ENCODE measurements at regions of chr5 and their contacts with region 1.

Region 1: GRCh38 chr5:143002459-143003328 is 232.5 kb downstream of the ARHGAP26 start:
- DNase-seq: peak; percentile 96
- H3K4me3 Mint-ChIP-seq: no peak overlapping the region
- H3K27ac Mint-ChIP-seq: peak overlapping the region; percentile 92
- H3K4me1 Mint-ChIP-seq: peaks cover 29% of the 10 kb centered on the region
- H3K27me3 Mint-ChIP-seq: no peaks in the 10 kb centered on the region
- CTCF ChIP-seq: peak; percentile 72

Region 2: DNA sequence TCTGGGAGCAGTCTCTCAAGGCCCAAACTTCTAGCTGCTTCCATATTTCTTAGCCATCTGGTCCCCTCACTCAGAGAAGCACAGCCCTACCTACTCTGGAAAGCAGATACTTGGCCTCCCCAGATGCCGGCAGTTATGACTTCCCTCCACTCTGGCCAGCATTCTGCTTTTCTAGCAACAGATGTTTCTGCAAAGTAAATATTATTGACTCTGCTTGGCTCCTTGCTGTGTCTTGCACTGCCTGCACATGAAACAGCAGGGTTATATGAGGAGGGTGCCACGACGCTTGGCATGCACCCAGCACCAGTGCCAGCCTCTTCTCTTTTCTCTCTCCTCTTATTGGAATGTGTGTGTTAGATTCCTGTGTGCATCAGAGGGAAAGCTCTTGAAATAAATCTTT is 132.8 kb before region 1 on chr5:
- CTCF ChIA-PET with region 1: no interaction called
- POLR2A ChIA-PET with region 1: no interaction called
- intact Hi-C with region 1: no loop called
- DNase-seq: no peak
- H3K4me3 Mint-ChIP-seq: no peak overlapping the region
- H3K27ac Mint-ChIP-seq: no peak overlapping the region
- H3K4me1 Mint-ChIP-seq: peaks cover 63% of the 10 kb centered on the region
- H3K27me3 Mint-ChIP-seq: no peaks in the 10 kb centered on the region
- CTCF ChIP-seq: no peak

Region 3: DNA sequence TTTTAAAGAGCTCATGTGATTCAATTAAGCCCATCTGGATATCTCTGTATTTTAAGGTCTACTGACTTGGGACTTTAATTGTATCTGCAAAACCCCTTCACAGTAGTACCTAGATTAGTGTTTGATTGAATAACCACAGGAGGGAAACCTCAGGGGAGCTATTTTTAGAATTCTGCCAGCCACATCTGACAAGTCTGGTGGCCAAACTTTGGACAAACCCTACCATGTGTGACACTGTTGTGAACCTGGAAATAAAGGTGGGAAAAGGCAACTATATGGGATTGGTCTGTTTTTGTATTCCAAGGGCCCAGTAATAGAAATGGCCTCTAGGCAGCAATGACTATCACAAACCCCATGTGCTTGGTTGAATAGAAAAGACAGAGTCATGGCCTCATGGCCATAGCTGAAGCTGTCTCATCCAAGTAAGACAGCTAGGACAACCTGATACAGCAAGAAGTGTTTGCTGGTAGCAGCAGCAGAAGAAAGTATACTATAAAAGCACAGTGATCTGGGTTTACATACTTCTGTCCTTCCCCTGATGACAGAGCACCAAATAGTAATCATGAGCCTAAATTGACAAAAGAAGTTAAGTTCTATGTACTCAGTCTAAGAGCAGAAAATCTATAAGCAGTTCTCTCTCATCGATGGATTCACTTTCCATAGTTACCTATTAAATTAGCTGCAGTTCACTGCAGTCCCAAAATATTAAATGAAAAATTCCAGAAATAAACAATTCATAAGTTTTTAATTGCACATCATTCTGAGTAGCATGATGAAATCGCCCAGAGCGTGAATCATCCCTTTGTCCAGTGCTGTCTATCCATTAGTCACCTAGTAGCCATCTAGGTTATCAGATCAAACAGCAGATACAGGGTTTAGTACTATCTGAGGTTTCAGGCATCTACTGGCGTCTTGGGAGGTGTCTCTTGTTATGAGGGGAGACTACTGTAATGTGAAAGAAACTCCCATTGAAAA is 42.7 kb before region 1 on chr5:
- CTCF ChIA-PET with region 1: interaction called, 6 read pairs
- POLR2A ChIA-PET with region 1: interaction called, 3 read pairs
- intact Hi-C with region 1: loop called (anchors 2 kb)
- DNase-seq: peak; percentile 89
- H3K4me3 Mint-ChIP-seq: no peak overlapping the region
- H3K27ac Mint-ChIP-seq: peak overlapping the region; percentile 60
- H3K4me1 Mint-ChIP-seq: peaks cover 26% of the 10 kb centered on the region
- H3K27me3 Mint-ChIP-seq: no peaks in the 10 kb centered on the region
- CTCF ChIP-seq: no peak

Region 4: DNA sequence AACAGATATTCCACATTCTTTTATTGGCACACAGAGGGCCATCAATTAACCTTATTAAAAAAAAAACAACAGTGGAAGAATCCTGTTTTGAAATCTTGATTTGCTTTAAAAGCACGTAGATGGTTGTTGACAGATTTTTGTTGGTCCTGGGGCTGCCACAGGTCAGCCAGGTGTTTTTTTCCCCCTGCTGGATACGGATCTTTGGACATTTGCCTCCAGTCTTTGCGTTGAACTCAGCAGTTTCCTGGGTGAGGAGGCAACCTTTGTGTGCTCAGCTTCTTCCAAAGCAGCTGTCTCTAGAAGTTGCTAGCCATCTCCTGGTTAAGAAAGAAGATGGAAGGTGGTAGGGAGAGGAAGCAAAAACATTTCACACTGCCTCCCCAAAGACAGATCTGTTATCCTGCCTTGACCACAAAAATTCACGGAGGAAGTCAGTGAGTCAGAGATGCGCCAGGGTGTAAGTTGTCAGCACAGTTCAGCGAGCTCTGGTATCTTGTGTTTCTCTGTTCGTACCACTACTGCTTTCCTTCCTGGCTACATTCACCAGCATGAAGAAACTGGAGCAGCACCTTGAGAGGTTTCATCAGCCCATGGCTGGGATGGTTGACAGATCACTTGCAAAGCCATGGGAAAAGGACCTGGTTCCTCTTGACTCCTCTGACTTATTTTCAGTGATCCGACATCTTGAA is 25.2 kb before region 1 on chr5:
- CTCF ChIA-PET with region 1: interaction called, 14 read pairs
- POLR2A ChIA-PET with region 1: interaction called, 7 read pairs
- intact Hi-C with region 1: no loop called
- DNase-seq: peak; percentile 93
- H3K4me3 Mint-ChIP-seq: peak overlapping the region; percentile 29
- H3K27ac Mint-ChIP-seq: peak overlapping the region; percentile 87
- H3K4me1 Mint-ChIP-seq: peaks cover 43% of the 10 kb centered on the region
- H3K27me3 Mint-ChIP-seq: no peaks in the 10 kb centered on the region
- CTCF ChIP-seq: no peak

Region 5: GRCh38 chr5:143244000-143244736 is 241.5 kb after region 1 on chr5:
- CTCF ChIA-PET with region 1: interaction called, 4 read pairs
- POLR2A ChIA-PET with region 1: interaction called, 6 read pairs
- intact Hi-C with region 1: loop called (anchors 5 kb)
- DNase-seq: peak; percentile 98
- H3K4me3 Mint-ChIP-seq: peak overlapping the region; percentile 54
- H3K27ac Mint-ChIP-seq: peak overlapping the region; percentile 84
- H3K4me1 Mint-ChIP-seq: peaks cover 61% of the 10 kb centered on the region
- H3K27me3 Mint-ChIP-seq: no peaks in the 10 kb centered on the region
- CTCF ChIP-seq: no peak

Region 6: GRCh38 chr5:143314659-143315058 is 312.0 kb after region 1 on chr5:
- CTCF ChIA-PET with region 1: interaction called, 3 read pairs
- POLR2A ChIA-PET with region 1: no interaction called
- intact Hi-C with region 1: loop called (anchors 5 kb)
- DNase-seq: peak; percentile 68
- H3K4me3 Mint-ChIP-seq: no peak overlapping the region
- H3K27ac Mint-ChIP-seq: peak overlapping the region; percentile 73
- H3K4me1 Mint-ChIP-seq: peaks cover 69% of the 10 kb centered on the region
- H3K27me3 Mint-ChIP-seq: no peaks in the 10 kb centered on the region
- CTCF ChIP-seq: no peak

Region 7: GRCh38 chr5:143506881-143507551 is 504.3 kb after region 1 on chr5:
- CTCF ChIA-PET with region 1: interaction called, 8 read pairs
- POLR2A ChIA-PET with region 1: interaction called, 3 read pairs
- intact Hi-C with region 1: loop called (anchors 5 kb)
- DNase-seq: peak; percentile 98
- H3K4me3 Mint-ChIP-seq: peak overlapping the region; percentile 44
- H3K27ac Mint-ChIP-seq: peak overlapping the region; percentile 84
- H3K4me1 Mint-ChIP-seq: peaks cover 41% of the 10 kb centered on the region
- H3K27me3 Mint-ChIP-seq: no peaks in the 10 kb centered on the region
- CTCF ChIP-seq: peak; percentile 16

Region 8: DNA sequence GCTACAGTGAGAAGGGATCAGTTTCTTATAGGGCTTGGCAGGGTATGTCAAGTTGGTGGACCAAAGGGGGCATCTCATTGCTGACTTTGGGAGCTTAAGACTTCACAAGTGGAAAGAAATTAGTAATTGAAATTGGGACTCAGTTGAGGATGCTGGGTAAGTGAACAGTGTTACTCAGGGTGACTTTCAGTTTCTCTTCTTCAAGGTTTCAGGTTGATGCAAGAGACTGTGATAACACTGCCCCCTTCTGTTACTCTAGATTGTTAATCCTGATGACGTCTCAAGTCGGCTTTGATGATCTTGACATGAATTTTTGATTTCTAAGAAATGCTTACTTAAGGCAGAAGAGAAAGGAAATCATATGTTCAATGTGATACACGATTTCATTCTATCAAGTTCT is 1189.3 kb after region 1 on chr5:
- CTCF ChIA-PET with region 1: interaction called, 5 read pairs
- POLR2A ChIA-PET with region 1: no interaction called
- intact Hi-C with region 1: loop called (anchors 10 kb)
- DNase-seq: peak; percentile 86
- H3K4me3 Mint-ChIP-seq: no peak overlapping the region
- H3K27ac Mint-ChIP-seq: no peak overlapping the region
- H3K4me1 Mint-ChIP-seq: peaks cover 30% of the 10 kb centered on the region
- H3K27me3 Mint-ChIP-seq: no peaks in the 10 kb centered on the region
- CTCF ChIP-seq: peak; percentile 41